GM12878 (cell line): ENCODE measurements at regions of chr16 and their contacts with region 1.

Region 1: GRCh38 chr16:68328151-68328859 is 17.5 kb downstream of the PRMT7 start:
- DNase-seq: peak; percentile 57
- ATAC-seq: peak; percentile 98
- H3K4me3 ChIP-seq: no peak overlapping the region
- H3K27ac ChIP-seq: no peak overlapping the region
- H3K4me1 ChIP-seq: peaks cover 22% of the 10 kb centered on the region
- H3K27me3 ChIP-seq: no peaks in the 10 kb centered on the region
- CTCF ChIP-seq: peak; percentile 92 to 99 (median 98); a peak in 5 of 6 replicates
- EP300 ChIP-seq: no peak
- POLR2A ChIP-seq: no peak
- RAD21 ChIP-seq: peak; percentile 98

Region 2: GRCh38 chr16:68237243-68238028 is 90.9 kb before region 1 on chr16:
- CTCF ChIA-PET with region 1: interaction called, 64 read pairs
- POLR2A ChIA-PET with region 1: interaction called, 4 read pairs
- RAD21 ChIA-PET with region 1: interaction called, 12 read pairs
- SMC1A ChIA-PET with region 1: interaction called, 18 read pairs
- in situ Hi-C with region 1: no loop called
- intact Hi-C with region 1: loop called (anchors 1 kb)
- DNase-seq: peak; percentile 86
- ATAC-seq: peak; percentile 93
- H3K4me3 ChIP-seq: peak overlapping the region; percentile 62
- H3K27ac ChIP-seq: peak overlapping the region; percentile 14; the same call in 1 of the 2 replicates
- H3K4me1 ChIP-seq: peaks cover 11% of the 10 kb centered on the region
- H3K27me3 ChIP-seq: no peaks in the 10 kb centered on the region
- CTCF ChIP-seq: no peak
- EP300 ChIP-seq: no peak
- POLR2A ChIP-seq: peak; percentile 76
- RAD21 ChIP-seq: no peak

Region 3: GRCh38 chr16:68251832-68252231 is 76.5 kb before region 1 on chr16:
- CTCF ChIA-PET with region 1: interaction called, 747 read pairs
- POLR2A ChIA-PET with region 1: interaction called, 4 read pairs
- RAD21 ChIA-PET with region 1: interaction called, 399 read pairs
- SMC1A ChIA-PET with region 1: interaction called, 32 read pairs
- in situ Hi-C with region 1: loop called (anchors 5 kb)
- intact Hi-C with region 1: no loop called
- DNase-seq: no peak
- ATAC-seq: peak; percentile 16; the same call in 1 of the 3 replicates
- H3K4me3 ChIP-seq: no peak overlapping the region
- H3K27ac ChIP-seq: no peak overlapping the region
- H3K4me1 ChIP-seq: peaks cover 9% of the 10 kb centered on the region
- H3K27me3 ChIP-seq: no peaks in the 10 kb centered on the region
- CTCF ChIP-seq: no peak
- EP300 ChIP-seq: no peak
- POLR2A ChIP-seq: no peak
- RAD21 ChIP-seq: no peak

Region 4: DNA sequence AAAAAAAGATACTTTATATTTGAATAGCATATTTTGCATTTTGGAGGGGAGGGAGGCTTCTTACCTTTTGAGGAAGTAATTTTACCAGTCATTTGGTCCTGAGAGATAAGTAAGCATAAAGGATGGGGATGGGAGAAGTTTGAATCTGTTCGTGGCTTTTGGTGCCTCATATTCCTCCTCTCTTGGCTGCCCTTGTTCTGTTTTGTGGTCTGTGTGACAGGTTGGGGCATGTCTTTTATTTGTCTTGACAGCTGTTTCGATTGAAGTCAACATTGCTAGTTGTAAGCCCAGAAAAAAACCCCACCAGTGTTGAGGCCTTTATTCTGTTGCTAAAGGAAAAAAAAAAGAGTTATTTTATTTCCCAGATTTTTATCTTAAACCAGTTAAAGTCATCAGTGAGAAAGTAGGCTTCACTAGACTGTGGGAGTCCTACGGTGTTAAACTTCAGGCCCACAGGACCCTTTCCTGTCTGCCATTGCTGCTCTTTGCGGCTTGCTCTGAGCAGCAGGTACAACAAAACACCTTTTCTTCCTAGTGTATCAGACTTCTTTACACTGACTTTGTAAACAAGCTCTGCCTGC is 52.6 kb before region 1 on chr16:
- CTCF ChIA-PET with region 1: interaction called, 10 read pairs
- POLR2A ChIA-PET with region 1: interaction called, 3 read pairs
- RAD21 ChIA-PET with region 1: interaction called, 4 read pairs
- SMC1A ChIA-PET with region 1: interaction called, 15 read pairs
- in situ Hi-C with region 1: no loop called
- intact Hi-C with region 1: no loop called
- DNase-seq: peak; percentile 96
- ATAC-seq: peak; percentile 87
- H3K4me3 ChIP-seq: peak overlapping the region; percentile 28; the same call in 1 of the 2 replicates
- H3K27ac ChIP-seq: peak overlapping the region; percentile 70
- H3K4me1 ChIP-seq: peaks cover 37% of the 10 kb centered on the region
- H3K27me3 ChIP-seq: no peaks in the 10 kb centered on the region
- CTCF ChIP-seq: no peak
- EP300 ChIP-seq: peak; percentile 44 to 80; a peak in 3 of 4 replicates
- POLR2A ChIP-seq: no peak
- RAD21 ChIP-seq: no peak

Region 5: DNA sequence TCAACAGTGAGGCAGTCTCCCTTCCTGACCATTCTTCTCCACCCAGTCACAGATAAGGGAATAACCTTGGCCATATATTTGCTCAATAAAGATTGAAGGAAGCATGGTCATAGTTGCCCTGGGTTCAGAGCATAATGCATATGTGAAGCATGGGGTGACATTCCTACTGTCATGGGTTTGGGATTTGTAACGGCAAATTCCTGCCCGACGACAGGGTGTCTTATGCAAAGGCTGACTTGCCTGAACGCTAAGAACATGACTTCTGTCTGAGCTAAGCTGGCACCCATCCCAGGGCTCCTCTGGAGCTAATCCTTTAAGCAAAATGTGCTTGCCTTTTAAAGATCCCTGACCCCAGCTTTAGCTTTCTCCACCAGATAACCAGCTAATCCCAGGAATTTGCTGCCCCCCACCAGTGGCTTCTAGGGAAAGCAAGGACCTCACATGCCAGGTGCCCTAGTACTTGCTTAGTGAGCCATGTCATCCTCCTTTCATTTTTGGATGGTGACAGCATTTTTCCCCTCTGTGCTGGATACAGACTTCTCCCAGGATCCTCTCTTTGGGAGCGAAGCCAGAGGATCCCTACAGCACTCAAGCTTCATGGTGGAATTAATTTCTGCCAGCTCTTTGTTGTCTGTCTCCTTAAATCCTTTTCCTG is 29.3 kb before region 1 on chr16:
- CTCF ChIA-PET with region 1: interaction called, 15 read pairs
- POLR2A ChIA-PET with region 1: interaction called, 3 read pairs
- RAD21 ChIA-PET with region 1: interaction called, 3 read pairs
- SMC1A ChIA-PET with region 1: interaction called, 4 read pairs
- in situ Hi-C with region 1: no loop called
- intact Hi-C with region 1: no loop called
- DNase-seq: no peak
- ATAC-seq: no peak
- H3K4me3 ChIP-seq: no peak overlapping the region
- H3K27ac ChIP-seq: no peak overlapping the region
- H3K4me1 ChIP-seq: no peaks in the 10 kb centered on the region
- H3K27me3 ChIP-seq: no peaks in the 10 kb centered on the region
- CTCF ChIP-seq: no peak
- EP300 ChIP-seq: no peak
- POLR2A ChIP-seq: 0 out of 2 replicates have a peak, but pooled peaks have one; percentile 8
- RAD21 ChIP-seq: no peak